Mammary epithelial cell (primary cell): ENCODE measurements at regions of chr16 and their contacts with region 1.

Region 1: GRCh38 chr16:71845639-71846430 is at the start of gene ATXN1L:
- DNase-seq: peak; percentile 91
- H3K4me3 ChIP-seq: peak within 1 kb of the TSS; percentile 85 to 97 (median 95)
- H3K27ac ChIP-seq: peak within 1 kb of the TSS; percentile 90
- H3K4me1 ChIP-seq: peaks cover 11% of the 10 kb centered on the region
- H3K27me3 ChIP-seq: no peaks in the 10 kb centered on the region
- CTCF ChIP-seq: no peak
- total RNA-seq, gene ATXN1L: 15.5 to 16.7 TPM

Region 2: DNA sequence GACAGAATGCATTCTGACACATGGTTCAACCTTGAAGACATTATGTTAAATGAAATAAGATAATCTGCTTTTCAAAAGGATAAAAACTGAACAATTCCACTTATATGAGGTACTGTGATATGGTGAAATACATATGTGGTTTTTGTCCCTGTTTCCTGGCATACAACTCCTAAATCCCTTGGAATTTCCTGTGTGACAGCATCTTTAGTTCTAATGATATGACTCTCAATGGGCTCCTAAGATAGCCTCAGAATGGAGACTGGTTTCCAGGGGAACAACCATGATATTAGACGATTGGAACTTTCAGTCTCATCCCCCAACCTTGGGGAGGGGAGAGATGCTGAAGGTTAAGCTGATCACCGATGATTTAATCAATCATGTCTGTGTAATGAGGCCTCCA is 83.6 kb before region 1 on chr16:
- CTCF ChIA-PET with region 1: no interaction called
- dilution Hi-C with region 1: no loop called
- in situ Hi-C with region 1: no loop called
- intact Hi-C with region 1: no loop called
- DNase-seq: peak; percentile 2
- H3K4me3 ChIP-seq: no peak overlapping the region
- H3K27ac ChIP-seq: no peak overlapping the region
- H3K4me1 ChIP-seq: no peaks in the 10 kb centered on the region
- H3K27me3 ChIP-seq: no peaks in the 10 kb centered on the region
- CTCF ChIP-seq: no peak

Region 3: GRCh38 chr16:71788578-71788977 is 57.3 kb before region 1 on chr16:
- CTCF ChIA-PET with region 1: no interaction called
- dilution Hi-C with region 1: loop called (anchors 5 kb)
- in situ Hi-C with region 1: no loop called
- intact Hi-C with region 1: no loop called
- DNase-seq: no peak
- H3K4me3 ChIP-seq: no peak overlapping the region
- H3K27ac ChIP-seq: no peak overlapping the region
- H3K4me1 ChIP-seq: no peaks in the 10 kb centered on the region
- H3K27me3 ChIP-seq: no peaks in the 10 kb centered on the region
- CTCF ChIP-seq: no peak

Region 4: DNA sequence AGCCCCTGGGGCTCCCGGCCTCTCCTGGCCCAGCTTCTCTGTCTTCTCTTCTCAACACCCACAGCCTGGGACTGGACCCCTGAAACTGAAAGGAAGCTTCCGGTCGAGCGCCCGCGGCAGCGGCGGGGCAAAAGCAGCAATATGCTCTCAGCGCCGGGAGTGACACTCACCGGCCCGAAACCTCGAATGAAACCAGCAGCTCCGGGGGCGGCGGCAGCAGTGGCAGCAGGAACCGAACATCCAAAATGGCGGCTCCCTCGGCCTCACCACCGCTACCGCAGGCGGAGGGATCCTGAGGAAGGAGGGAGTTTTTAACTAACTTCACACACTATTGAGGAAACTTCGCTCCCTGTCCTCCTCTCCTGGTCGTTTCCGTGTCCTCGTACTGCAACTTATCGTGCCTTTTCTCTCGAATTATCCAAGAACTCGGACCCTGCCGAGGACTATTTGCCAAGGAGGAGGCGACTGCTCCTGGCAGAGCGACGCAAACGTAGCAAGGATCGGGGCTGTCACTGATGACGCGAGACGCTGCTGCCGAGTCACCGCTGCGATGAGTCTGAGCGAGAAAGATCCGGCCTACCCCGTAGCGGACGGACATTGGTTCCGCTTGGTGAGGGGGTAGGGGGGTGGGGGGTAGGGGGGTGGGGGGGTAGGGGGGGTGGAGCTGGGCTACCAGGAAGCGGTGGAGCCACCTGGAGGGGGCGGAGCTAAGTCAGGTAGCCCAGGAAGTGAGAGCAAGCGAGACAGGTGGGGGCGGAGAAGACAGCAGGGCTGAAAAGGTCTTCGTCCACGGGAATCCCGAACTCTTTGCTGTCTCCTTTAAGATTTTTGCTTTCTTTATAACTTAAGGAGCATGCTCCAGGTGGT is 37.0 kb before region 1 on chr16 and contains the start of gene AP1G1:
- CTCF ChIA-PET with region 1: no interaction called
- dilution Hi-C with region 1: no loop called
- in situ Hi-C with region 1: no loop called
- intact Hi-C with region 1: loop called (anchors 1 kb)
- DNase-seq: peak; percentile 98
- H3K4me3 ChIP-seq: peak within 1 kb of the TSS; percentile 85 to 99 (median 90)
- H3K27ac ChIP-seq: peak within 1 kb of the TSS; percentile 100
- H3K4me1 ChIP-seq: peaks cover 10% of the 10 kb centered on the region
- H3K27me3 ChIP-seq: no peaks in the 10 kb centered on the region
- CTCF ChIP-seq: no peak
- total RNA-seq, gene AP1G1: 80.1 to 95.4 TPM

Region 5: GRCh38 chr16:71894921-71895678 is 49.3 kb after region 1 on chr16 and contains the start of gene IST1:
- CTCF ChIA-PET with region 1: no interaction called
- dilution Hi-C with region 1: no loop called
- in situ Hi-C with region 1: no loop called
- intact Hi-C with region 1: loop called (anchors 5 kb)
- DNase-seq: peak; percentile 98
- H3K4me3 ChIP-seq: peak within 1 kb of the TSS; percentile 85 to 96 (median 87)
- H3K27ac ChIP-seq: peak within 1 kb of the TSS; percentile 87
- H3K4me1 ChIP-seq: peaks cover 15% of the 10 kb centered on the region
- H3K27me3 ChIP-seq: no peaks in the 10 kb centered on the region
- CTCF ChIP-seq: no peak
- total RNA-seq, gene IST1: 123 to 203 TPM